Heart right ventricle (tissue), 16 donors: ENCODE measurements at regions of chr2 and their contacts with region 1.

Region 1: DNA sequence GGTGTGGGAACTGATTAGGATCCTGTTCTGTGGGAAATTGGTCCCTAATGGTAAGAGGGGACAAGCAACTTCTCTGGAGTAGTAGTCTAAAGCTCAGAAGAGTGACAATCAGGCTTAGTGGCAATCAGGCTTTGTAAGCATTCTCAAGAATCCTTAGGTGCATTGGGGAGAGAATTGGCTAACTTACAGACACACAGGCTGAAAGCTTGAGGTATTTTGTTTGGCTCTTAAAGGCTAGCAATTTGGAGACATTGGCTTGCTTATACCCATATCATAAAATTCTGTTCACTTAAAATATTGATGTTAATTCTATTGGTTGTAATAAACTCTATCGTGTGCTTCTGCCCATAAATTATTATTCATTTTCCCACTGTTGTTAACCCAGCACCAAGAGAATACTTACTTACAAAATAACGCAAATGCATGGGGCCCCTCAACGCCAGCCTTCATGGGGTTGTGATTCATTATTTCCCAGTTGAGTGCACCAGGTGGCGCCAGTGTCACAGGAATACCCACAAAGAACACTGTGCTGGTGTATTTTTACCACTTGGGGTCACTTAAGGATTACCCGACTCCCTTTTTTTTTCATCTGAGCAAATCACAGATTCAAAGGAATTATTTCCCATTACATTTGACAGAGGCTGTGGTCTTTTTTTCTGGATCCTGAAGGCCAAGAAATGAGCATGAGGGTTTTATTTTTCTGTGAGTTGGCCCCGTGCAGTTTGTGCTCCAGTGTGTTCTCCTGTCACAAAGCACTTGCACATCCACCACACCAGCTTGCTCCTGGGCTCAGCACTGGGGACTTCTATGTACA is 45.5 kb downstream of the DDX1 start:
- DNase-seq: peak; percentile 55 to 76
- ATAC-seq: peak; percentile 82 to 94 (median 88)
- H3K4me3 ChIP-seq: no peak overlapping the region
- H3K27ac ChIP-seq: peak overlapping the region in 2 of 10 donors; percentile 27 to 35
- H3K4me1 ChIP-seq: peaks cover 6 to 61% (median 28%) of the 10 kb centered on the region in 9 donors
- H3K27me3 ChIP-seq: no peaks in the 10 kb centered on the region
- CTCF ChIP-seq: peak; percentile 62 to 96 (median 88)

Region 2: GRCh38 chr2:15730545-15731212 is 93.5 kb after region 1 on chr2:
- intact Hi-C with region 1: loop called in 1 of 10 experiments (anchors 10 kb)
- DNase-seq: peak; percentile 94 to 95
- ATAC-seq: peak; percentile 86 to 96 (median 94)
- H3K4me3 ChIP-seq: no peak overlapping the region
- H3K27ac ChIP-seq: peak overlapping the region in 4 of 10 donors; percentile 6 to 77 (median 54)
- H3K4me1 ChIP-seq: peaks cover 26 to 59% (median 51%) of the 10 kb centered on the region in 9 donors
- H3K27me3 ChIP-seq: no peaks in the 10 kb centered on the region
- CTCF ChIP-seq: no peak

Region 3: DNA sequence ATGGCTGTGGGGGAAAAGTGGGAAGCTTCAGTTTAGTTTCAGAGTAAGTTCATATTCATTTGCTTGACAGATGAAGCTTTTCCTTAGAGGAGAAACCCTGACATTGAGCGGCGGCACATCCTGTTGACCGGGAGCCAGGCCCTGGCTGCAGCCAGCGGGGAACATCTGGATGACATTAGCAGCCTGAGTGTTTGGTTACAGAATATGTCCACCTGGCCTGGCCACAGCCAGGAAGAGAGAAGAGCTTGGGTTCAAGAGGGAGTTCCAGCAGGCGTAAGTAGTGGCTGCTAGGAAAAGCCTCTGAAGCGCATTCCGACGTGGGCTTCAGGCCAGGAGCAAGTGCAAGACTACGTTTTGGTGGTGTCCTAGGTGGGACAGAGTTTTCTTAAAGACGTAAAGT is 158.2 kb after region 1 on chr2:
- intact Hi-C with region 1: loop called in 1 of 10 experiments (anchors 2 kb)
- DNase-seq: peak; percentile 27 to 30
- ATAC-seq: peak in 5 of 8 donors; percentile 38 to 81 (median 68)
- H3K4me3 ChIP-seq: no peak overlapping the region
- H3K27ac ChIP-seq: no peak overlapping the region
- H3K4me1 ChIP-seq: peaks cover 4 to 35% (median 12%) of the 10 kb centered on the region in 9 donors
- H3K27me3 ChIP-seq: peaks cover 0 to 5% (median 0%) of the 10 kb centered on the region in 7 donors
- CTCF ChIP-seq: no peak

Region 4: GRCh38 chr2:15886231-15886630 is 249.1 kb after region 1 on chr2:
- intact Hi-C with region 1: no loop called
- DNase-seq: no peak
- ATAC-seq: no peak
- H3K4me3 ChIP-seq: no peak overlapping the region
- H3K27ac ChIP-seq: no peak overlapping the region
- H3K4me1 ChIP-seq: peaks cover 0 to 8% (median 3%) of the 10 kb centered on the region in 9 donors
- H3K27me3 ChIP-seq: no peaks in the 10 kb centered on the region
- CTCF ChIP-seq: no peak

Region 5: DNA sequence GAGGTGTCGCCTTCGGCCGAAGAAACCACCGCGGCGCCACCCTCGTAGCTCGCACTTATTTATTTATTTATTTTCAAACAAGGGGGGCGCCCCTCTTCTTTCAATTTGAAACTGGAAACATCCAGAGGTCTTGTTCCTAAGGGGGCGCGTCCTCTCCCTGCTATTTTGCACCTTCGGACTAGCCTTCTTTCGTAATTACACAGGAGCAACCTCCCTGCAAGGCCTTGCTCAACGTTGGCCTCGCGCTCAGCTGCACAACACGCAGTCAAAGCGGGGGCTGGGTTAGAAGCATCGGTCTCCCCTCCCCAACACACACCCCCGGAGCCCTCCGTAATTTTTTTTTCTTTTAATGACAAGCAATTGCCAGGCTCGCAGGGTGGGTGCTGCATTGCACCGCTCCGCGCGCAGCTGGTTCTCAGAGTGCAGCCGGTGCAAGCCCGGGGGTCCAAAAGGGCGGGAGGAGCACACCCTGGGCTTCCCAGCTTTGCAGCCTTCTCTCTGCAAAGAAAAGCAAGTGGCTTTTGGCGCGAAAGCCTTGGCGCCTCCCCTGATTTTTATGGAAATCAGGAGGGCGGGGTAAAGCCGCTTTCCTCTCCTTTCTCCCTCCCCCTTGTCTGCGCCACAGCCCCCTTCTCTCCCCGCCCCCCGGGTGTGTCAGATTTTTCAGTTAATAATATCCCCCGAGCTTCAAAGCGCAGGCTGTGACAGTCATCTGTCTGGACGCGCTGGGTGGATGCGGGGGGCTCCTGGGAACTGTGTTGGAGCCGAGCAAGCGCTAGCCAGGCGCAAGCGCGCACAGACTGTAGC is 302.9 kb after region 1 on chr2 and contains the start of gene MYCN:
- intact Hi-C with region 1: loop called in 8 of 10 experiments (anchors 2 to 10 kb)
- DNase-seq: peak; percentile 27 to 65
- ATAC-seq: peak; percentile 28 to 83 (median 50)
- H3K4me3 ChIP-seq: peak within 1 kb of the TSS; percentile 40 to 75 (median 57)
- H3K27ac ChIP-seq: peak within 1 kb of the TSS in 4 of 10 donors; percentile 9 to 53 (median 38)
- H3K4me1 ChIP-seq: peaks cover 4 to 52% (median 45%) of the 10 kb centered on the region in 9 donors
- H3K27me3 ChIP-seq: peaks cover 0 to 67% (median 38%) of the 10 kb centered on the region in 7 donors
- CTCF ChIP-seq: peak in 7 of 9 donors; percentile 2 to 81 (median 77)
- total RNA-seq, gene MYCN: 0.14 to 1.4 (median 0.61) TPM

Region 6: DNA sequence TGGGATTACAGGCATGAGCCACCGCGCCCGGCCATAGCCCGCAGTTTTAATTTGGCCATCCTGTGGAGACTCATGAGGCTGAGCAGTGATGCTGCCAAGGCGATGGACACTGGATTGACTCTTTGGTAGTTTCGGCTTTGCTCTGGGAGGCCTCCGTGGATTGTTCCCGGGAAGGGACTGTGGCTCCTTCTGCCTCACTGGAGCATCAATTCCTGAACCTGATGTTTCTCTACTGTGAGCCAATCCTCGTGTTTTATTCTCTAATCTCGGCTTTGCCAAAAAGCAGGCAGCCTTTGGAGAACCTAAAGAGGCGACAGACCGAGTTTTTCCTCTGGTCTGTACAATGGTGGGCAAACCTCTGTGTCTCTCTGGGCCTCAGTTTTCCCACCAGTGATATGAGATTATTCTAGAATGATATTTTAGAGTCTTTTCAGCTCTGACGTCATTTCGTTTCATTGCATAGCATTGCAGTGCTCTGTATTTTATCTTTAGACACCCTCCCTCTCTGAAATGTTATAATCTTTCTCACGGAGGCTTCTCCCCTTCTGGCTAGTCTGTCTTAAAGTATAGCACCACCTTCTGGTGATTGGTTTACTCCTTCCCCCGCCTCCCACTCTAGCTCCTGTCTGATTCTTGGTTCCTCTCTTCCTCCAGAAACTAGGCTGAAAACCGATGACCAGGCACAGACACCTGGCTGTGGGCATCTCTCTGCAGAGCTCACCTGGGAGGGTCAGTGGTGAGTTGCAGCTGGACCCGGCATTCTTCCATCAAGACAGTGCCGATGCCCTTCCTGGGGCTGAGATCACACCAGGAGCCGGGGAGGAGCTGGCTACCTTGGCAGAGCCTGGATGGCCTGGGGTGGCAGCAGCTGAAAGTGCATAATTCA is 644.5 kb after region 1 on chr2:
- intact Hi-C with region 1: loop called (anchors 2 to 10 kb)
- DNase-seq: peak in 1 of 2 donors; percentile 21
- ATAC-seq: peak in 7 of 8 donors; percentile 49 to 82 (median 70)
- H3K4me3 ChIP-seq: no peak overlapping the region
- H3K27ac ChIP-seq: no peak overlapping the region
- H3K4me1 ChIP-seq: no peaks in the 10 kb centered on the region
- H3K27me3 ChIP-seq: no peaks in the 10 kb centered on the region
- CTCF ChIP-seq: peak in 8 of 9 donors; percentile 8 to 72 (median 60)

Region 7: DNA sequence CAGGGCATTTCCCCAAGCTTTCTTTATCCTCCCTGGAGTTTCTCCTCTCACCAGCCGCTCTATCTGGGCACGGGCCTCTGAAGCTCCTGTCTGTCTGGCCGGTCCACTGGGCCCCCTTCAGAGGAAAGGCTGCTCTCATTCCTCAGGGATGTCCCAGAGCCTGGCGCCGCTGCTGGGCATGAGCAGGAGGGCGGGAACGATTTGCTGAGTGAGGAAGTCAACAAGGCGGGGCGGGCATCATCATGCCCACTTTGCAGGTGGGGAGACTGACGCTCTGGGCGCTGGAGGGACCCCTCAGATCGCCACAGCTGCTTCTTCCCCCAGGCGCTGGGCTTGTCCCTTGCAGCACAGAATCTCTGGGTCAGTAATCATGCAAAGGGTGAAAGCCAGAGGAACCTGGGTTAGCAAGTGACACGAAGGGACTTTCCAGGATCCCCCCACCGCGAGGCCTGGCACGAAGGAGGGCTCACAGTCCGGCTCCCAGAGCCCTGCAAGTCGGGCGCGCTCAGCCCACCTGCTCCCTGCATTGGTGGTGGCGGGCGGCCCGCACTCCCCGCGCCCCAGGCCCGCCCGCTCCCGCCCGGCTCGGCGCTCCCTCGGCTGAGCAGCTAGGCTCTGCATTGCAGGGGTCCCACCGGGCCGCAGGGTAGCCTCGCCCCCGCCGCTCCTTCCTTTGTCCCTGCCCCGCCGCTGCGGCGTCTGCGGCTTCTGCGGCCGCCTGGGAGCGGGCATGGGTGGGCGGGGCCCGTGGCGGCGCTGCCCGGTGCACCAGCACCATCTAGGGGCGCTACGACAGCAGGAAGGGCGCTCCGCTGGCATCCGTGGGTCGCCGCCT is 870.7 kb after region 1 on chr2:
- intact Hi-C with region 1: loop called in 9 of 10 experiments (anchors 2 to 10 kb)
- DNase-seq: peak; percentile 14 to 52
- ATAC-seq: peak; percentile 64 to 90 (median 75)
- H3K4me3 ChIP-seq: peak overlapping the region in 9 of 10 donors; percentile 34 to 53 (median 42)
- H3K27ac ChIP-seq: no peak overlapping the region
- H3K4me1 ChIP-seq: peaks cover 0 to 11% (median 5%) of the 10 kb centered on the region in 9 donors
- H3K27me3 ChIP-seq: peaks cover 0 to 63% (median 38%) of the 10 kb centered on the region in 7 donors
- CTCF ChIP-seq: peak; percentile 24 to 75 (median 69)

Region 8: GRCh38 chr2:16608661-16609643 is 971.8 kb after region 1 on chr2:
- intact Hi-C with region 1: loop called (anchors 2 to 5 kb)
- DNase-seq: peak; percentile 86 to 88
- ATAC-seq: peak; percentile 83 to 92 (median 88)
- H3K4me3 ChIP-seq: peak overlapping the region in 9 of 10 donors; percentile 27 to 58 (median 48)
- H3K27ac ChIP-seq: peak overlapping the region in 5 of 10 donors; percentile 7 to 46 (median 33)
- H3K4me1 ChIP-seq: peaks cover 0 to 32% (median 17%) of the 10 kb centered on the region in 9 donors
- H3K27me3 ChIP-seq: no peaks in the 10 kb centered on the region
- CTCF ChIP-seq: peak; percentile 81 to 96 (median 92)